ENCODE measurements at regions of chr12 and their contacts with region 1.

Region 1: GRCh38 chr12:89862511-89863179 is 154.0 kb upstream of the ATP2B1 start:
- DNase-seq: peak; percentile 38
- H3K4me3 Mint-ChIP-seq: peak overlapping the region; percentile 74
- H3K27ac Mint-ChIP-seq: peak overlapping the region; percentile 95
- H3K4me1 Mint-ChIP-seq: peaks cover 44% of the 10 kb centered on the region
- H3K27me3 Mint-ChIP-seq: no peaks in the 10 kb centered on the region

Region 2: GRCh38 chr12:89179983-89180382 is 682.7 kb before region 1 on chr12:
- intact Hi-C with region 1: loop called (anchors 10 kb)
- DNase-seq: no peak
- H3K4me3 Mint-ChIP-seq: peak overlapping the region; percentile 50
- H3K27ac Mint-ChIP-seq: peak overlapping the region; percentile 86
- H3K4me1 Mint-ChIP-seq: peaks cover 71% of the 10 kb centered on the region
- H3K27me3 Mint-ChIP-seq: no peaks in the 10 kb centered on the region

Region 3: GRCh38 chr12:89225808-89226411 is 636.7 kb before region 1 on chr12:
- intact Hi-C with region 1: loop called (anchors 10 kb)
- DNase-seq: no peak
- H3K4me3 Mint-ChIP-seq: peak overlapping the region; percentile 70
- H3K27ac Mint-ChIP-seq: peak overlapping the region; percentile 100
- H3K4me1 Mint-ChIP-seq: peaks cover 67% of the 10 kb centered on the region
- H3K27me3 Mint-ChIP-seq: no peaks in the 10 kb centered on the region

Region 4: GRCh38 chr12:89882050-89882449 is 19.4 kb after region 1 on chr12:
- intact Hi-C with region 1: loop called (anchors 1 kb)
- DNase-seq: no peak
- H3K4me3 Mint-ChIP-seq: no peak overlapping the region
- H3K27ac Mint-ChIP-seq: no peak overlapping the region
- H3K4me1 Mint-ChIP-seq: peaks cover 36% of the 10 kb centered on the region
- H3K27me3 Mint-ChIP-seq: peaks cover 13% of the 10 kb centered on the region

Region 5: GRCh38 chr12:89918181-89918868 is 55.7 kb after region 1 on chr12:
- intact Hi-C with region 1: no loop called
- DNase-seq: no peak
- H3K4me3 Mint-ChIP-seq: no peak overlapping the region
- H3K27ac Mint-ChIP-seq: no peak overlapping the region
- H3K4me1 Mint-ChIP-seq: no peaks in the 10 kb centered on the region
- H3K27me3 Mint-ChIP-seq: peaks cover 7% of the 10 kb centered on the region

Region 6: DNA sequence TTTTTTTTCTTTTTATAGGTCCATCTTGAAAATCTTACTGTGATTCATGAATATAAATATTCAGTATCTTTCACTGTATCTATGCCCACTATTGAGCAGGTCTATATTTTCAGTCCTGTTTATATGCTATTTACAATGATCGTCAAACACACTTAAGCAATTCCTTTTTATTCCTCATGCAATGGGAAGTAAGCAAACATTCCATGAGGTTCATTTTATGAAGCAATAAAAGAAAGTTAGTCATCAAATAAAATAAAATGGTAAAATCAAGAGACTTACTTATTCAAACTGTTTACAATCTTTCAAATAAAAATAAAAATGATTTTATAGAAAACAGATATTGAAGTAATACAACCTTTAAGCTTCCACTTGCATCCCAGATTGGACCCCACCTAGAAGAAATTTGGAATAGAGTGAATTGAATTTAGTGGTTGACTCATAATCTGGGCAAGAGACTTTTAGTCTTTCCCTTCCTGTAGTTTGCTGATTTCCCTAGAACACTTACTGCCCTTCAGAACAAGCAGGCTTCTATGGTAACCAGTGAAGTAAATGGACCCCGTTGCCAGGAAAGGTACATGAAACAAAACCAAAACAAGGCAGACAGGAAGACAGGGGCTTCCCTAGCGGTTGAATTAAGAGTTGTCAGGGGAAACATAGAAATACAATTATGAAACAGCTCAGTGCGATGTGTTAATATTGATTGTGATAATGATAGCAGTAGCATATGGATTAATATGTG is 87.0 kb after region 1 on chr12:
- intact Hi-C with region 1: loop called (anchors 2 kb)
- DNase-seq: peak; percentile 38
- H3K4me3 Mint-ChIP-seq: no peak overlapping the region
- H3K27ac Mint-ChIP-seq: no peak overlapping the region
- H3K4me1 Mint-ChIP-seq: peaks cover 14% of the 10 kb centered on the region
- H3K27me3 Mint-ChIP-seq: peaks cover 2% of the 10 kb centered on the region

Region 7: GRCh38 chr12:90085494-90086274 is 223.0 kb after region 1 on chr12:
- intact Hi-C with region 1: loop called (anchors 10 kb)
- DNase-seq: no peak
- H3K4me3 Mint-ChIP-seq: no peak overlapping the region
- H3K27ac Mint-ChIP-seq: no peak overlapping the region
- H3K4me1 Mint-ChIP-seq: peaks cover 7% of the 10 kb centered on the region
- H3K27me3 Mint-ChIP-seq: no peaks in the 10 kb centered on the region